Sciatic nerve (tissue), 2 donors: ENCODE measurements at regions of chr3 and their contacts with region 1.

Region 1: GRCh38 chr3:174755833-174756829 is 103.0 kb upstream of the NAALADL2 start:
- DNase-seq: no peak
- ATAC-seq: no peak

Region 2: DNA sequence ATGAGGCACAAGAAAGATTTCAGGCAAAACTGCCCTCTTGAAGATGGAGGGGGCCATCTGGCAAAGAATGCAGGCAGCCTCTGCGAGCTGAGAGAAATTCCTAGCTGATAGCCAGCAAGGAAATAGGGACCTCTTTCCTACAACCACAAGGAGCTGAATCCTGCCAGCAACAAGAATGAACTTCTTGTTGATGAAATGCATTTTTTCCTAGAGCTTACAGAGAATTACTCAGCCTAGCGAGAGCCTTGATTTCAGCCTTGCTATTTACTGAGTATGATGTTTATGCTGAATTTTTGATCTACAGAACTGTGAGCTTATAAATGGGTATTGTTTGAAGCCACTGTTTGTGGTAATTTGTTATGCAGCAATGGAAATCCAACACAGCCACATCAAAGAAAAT is 45.5 kb before region 1 on chr3:
- intact Hi-C with region 1: loop called (anchors 2 kb)
- DNase-seq: no peak
- ATAC-seq: no peak

Region 3: DNA sequence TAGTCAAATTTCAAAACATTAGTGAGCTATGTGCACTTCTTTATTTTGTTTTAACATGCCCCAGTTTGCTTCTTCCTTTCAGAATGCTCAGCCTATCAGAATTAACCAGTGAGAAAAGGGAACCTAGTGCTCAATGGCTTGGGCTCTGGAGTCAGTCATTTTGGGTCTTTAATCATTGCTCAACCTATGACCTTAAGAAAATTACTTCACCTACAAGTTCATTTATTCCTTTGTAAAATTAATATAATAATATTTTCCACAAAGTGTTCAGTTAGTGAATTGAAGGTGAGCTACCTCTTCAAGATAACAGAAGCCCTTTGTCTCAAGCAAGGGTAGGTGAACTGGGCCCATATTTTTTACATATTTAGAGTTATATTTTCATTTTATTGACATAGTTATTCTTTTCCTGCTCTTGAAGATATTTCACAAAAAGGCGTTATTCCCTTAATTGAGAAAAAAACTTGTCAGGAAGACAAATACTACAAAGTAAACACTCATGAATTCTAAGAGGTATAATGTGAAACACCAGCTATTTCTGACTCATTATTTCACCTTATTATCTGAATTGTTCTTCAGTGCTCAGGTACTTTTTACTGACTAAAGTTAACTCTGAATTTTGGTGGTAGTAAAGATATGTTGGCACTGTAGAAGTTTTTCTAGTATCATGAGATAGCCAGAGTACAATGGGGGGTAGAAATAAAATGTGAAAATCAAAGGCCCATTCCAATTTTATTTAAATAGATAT is 518.5 kb after region 1 on chr3:
- intact Hi-C with region 1: no loop called
- DNase-seq: no peak
- ATAC-seq: no peak